ENCODE measurements at regions of chr6 and their contacts with region 1.

Region 1: DNA sequence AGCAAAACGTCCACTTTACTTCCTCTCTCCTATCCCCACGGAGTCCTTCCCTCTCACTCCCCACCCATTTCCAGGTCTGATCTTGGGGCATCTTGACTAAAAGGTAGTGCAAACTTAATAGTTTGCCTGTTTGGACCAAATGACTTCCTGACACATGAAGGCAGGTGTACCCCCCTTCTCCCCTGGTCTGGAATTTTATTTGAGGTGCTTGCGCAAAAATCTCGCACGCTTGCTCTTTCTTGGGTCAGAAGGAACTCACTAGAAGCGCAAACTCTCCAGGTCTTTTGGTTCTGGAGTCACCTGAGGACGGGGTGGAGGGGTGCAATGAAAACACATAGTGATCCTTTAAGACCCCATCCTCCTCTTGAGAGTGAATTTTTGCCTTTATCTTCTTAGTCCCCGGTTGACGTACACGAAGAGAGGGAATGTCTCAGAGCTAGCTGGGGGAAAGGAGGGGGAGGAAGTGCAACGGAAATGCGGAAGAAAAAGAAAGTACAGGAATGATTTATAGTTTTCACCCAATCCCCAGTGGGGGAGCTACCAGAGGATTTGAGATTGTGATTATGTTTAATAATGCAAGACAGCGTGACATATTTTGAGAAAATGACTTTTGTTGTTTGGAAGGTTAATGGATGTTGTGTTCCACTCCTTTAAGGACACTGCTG is 4.9 kb downstream of the ADGRB3 start:
- DNase-seq: no peak
- ATAC-seq: peak in 5 of 8 donors; percentile 16 to 50 (median 30)
- H3K4me3 ChIP-seq: peak overlapping the region in 9 of 10 donors; percentile 10 to 48 (median 39)
- H3K27ac ChIP-seq: peak overlapping the region; percentile 19 to 64 (median 50)
- H3K4me1 ChIP-seq: peaks cover 0 to 24% (median 0%) of the 10 kb centered on the region in 9 donors
- H3K27me3 ChIP-seq: peaks cover 0 to 35% (median 9%) of the 10 kb centered on the region in 7 donors
- CTCF ChIP-seq: no peak

Region 2: GRCh38 chr6:68689910-68690309 is 50.0 kb after region 1 on chr6:
- intact Hi-C with region 1: no loop called
- DNase-seq: no peak
- ATAC-seq: no peak
- H3K4me3 ChIP-seq: no peak overlapping the region
- H3K27ac ChIP-seq: no peak overlapping the region
- H3K4me1 ChIP-seq: no peaks in the 10 kb centered on the region
- H3K27me3 ChIP-seq: no peaks in the 10 kb centered on the region
- CTCF ChIP-seq: no peak

Region 3: GRCh38 chr6:68778356-68779020 is 138.5 kb after region 1 on chr6:
- intact Hi-C with region 1: loop called (anchors 1 to 10 kb)
- DNase-seq: peak in 1 of 2 donors; percentile 39
- ATAC-seq: peak in 7 of 8 donors; percentile 55 to 96 (median 82)
- H3K4me3 ChIP-seq: no peak overlapping the region
- H3K27ac ChIP-seq: no peak overlapping the region
- H3K4me1 ChIP-seq: peaks cover 0 to 9% (median 0%) of the 10 kb centered on the region in 9 donors
- H3K27me3 ChIP-seq: no peaks in the 10 kb centered on the region
- CTCF ChIP-seq: peak; percentile 47 to 82 (median 67)

Region 4: GRCh38 chr6:68967549-68968300 is 327.8 kb after region 1 on chr6:
- intact Hi-C with region 1: loop called in 6 of 10 experiments (anchors 10 kb)
- DNase-seq: peak; percentile 27 to 59
- ATAC-seq: peak in 6 of 8 donors; percentile 47 to 67 (median 60)
- H3K4me3 ChIP-seq: no peak overlapping the region
- H3K27ac ChIP-seq: no peak overlapping the region
- H3K4me1 ChIP-seq: peaks cover 0 to 8% (median 0%) of the 10 kb centered on the region in 9 donors
- H3K27me3 ChIP-seq: no peaks in the 10 kb centered on the region
- CTCF ChIP-seq: peak; percentile 72 to 91 (median 84)

Measured in heart right ventricle (tissue), 16 donors.